ENCODE measurements at regions of chr1 and their contacts with region 1.

Region 1: GRCh38 chr1:42052072-42052699 is 101.0 kb upstream of the GUCA2B start:
- DNase-seq: no peak
- ATAC-seq: no peak
- H3K4me3 ChIP-seq: no peak overlapping the region
- H3K4me3 Mint-ChIP-seq: no peak overlapping the region
- H3K27ac ChIP-seq: no peak overlapping the region
- H3K27ac Mint-ChIP-seq: no peak overlapping the region
- H3K4me1 ChIP-seq: no peaks in the 10 kb centered on the region
- H3K4me1 Mint-ChIP-seq: peaks cover 7% of the 10 kb centered on the region
- H3K27me3 ChIP-seq: peaks cover 2 to 7% of the 10 kb centered on the region in 2 experiments
- H3K27me3 Mint-ChIP-seq: peaks cover 64% of the 10 kb centered on the region
- CTCF ChIP-seq: no peak

Region 2: DNA sequence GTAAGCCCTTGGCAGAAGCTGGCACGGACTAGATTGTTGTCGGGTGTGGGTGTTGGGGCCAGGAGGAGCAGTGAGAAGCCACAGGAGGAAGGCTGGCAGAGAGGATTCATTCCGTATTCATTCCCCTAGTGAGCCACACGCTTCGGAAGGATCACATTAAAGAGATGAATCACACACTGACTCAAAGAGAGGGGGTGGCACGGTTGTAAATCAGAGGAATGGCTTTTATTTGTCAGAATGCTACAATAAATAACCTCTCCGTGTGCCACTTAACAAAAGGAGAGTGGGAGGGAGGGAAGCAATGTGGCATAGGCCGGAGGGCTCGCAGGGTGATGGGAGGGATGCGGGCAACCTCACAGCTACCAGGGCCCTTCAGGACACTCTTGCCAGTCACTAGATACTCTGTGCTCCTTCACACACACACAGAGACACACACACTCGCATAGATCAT is 269.0 kb before region 1 on chr1:
- CTCF ChIA-PET with region 1: no interaction called
- POLR2A ChIA-PET with region 1: no interaction called
- intact Hi-C with region 1: no loop called
- DNase-seq: peak in 1 of 9 experiments; percentile 25
- ATAC-seq: no peak
- H3K4me3 ChIP-seq: no peak overlapping the region
- H3K4me3 Mint-ChIP-seq: no peak overlapping the region
- H3K27ac ChIP-seq: no peak overlapping the region
- H3K27ac Mint-ChIP-seq: no peak overlapping the region
- H3K4me1 ChIP-seq: peaks cover 9% of the 10 kb centered on the region
- H3K4me1 Mint-ChIP-seq: peaks cover 17% of the 10 kb centered on the region
- H3K27me3 ChIP-seq: no peaks in the 10 kb centered on the region
- H3K27me3 Mint-ChIP-seq: no peaks in the 10 kb centered on the region
- CTCF ChIP-seq: no peak

Region 3: GRCh38 chr1:41868599-41868998 is 183.6 kb before region 1 on chr1:
- CTCF ChIA-PET with region 1: no interaction called
- POLR2A ChIA-PET with region 1: no interaction called
- intact Hi-C with region 1: no loop called
- DNase-seq: peak in 2 of 9 experiments; percentile 44 to 57
- ATAC-seq: no peak
- H3K4me3 ChIP-seq: no peak overlapping the region
- H3K4me3 Mint-ChIP-seq: no peak overlapping the region
- H3K27ac ChIP-seq: no peak overlapping the region
- H3K27ac Mint-ChIP-seq: no peak overlapping the region
- H3K4me1 ChIP-seq: no peaks in the 10 kb centered on the region
- H3K4me1 Mint-ChIP-seq: peaks cover 8% of the 10 kb centered on the region
- H3K27me3 ChIP-seq: no peaks in the 10 kb centered on the region
- H3K27me3 Mint-ChIP-seq: no peaks in the 10 kb centered on the region
- CTCF ChIP-seq: no peak

Region 4: GRCh38 chr1:42010381-42010780 is 41.8 kb before region 1 on chr1:
- CTCF ChIA-PET with region 1: no interaction called
- POLR2A ChIA-PET with region 1: no interaction called
- intact Hi-C with region 1: loop called in 1 of 2 experiments (anchors 2 kb)
- DNase-seq: no peak
- ATAC-seq: no peak
- H3K4me3 ChIP-seq: no peak overlapping the region
- H3K4me3 Mint-ChIP-seq: no peak overlapping the region
- H3K27ac ChIP-seq: no peak overlapping the region
- H3K27ac Mint-ChIP-seq: no peak overlapping the region
- H3K4me1 ChIP-seq: peaks cover 14% of the 10 kb centered on the region
- H3K4me1 Mint-ChIP-seq: peaks cover 42% of the 10 kb centered on the region
- H3K27me3 ChIP-seq: no peaks in the 10 kb centered on the region
- H3K27me3 Mint-ChIP-seq: no peaks in the 10 kb centered on the region
- CTCF ChIP-seq: no peak